ENCODE measurements at regions of chr9 and their contacts with region 1.

Region 1: DNA sequence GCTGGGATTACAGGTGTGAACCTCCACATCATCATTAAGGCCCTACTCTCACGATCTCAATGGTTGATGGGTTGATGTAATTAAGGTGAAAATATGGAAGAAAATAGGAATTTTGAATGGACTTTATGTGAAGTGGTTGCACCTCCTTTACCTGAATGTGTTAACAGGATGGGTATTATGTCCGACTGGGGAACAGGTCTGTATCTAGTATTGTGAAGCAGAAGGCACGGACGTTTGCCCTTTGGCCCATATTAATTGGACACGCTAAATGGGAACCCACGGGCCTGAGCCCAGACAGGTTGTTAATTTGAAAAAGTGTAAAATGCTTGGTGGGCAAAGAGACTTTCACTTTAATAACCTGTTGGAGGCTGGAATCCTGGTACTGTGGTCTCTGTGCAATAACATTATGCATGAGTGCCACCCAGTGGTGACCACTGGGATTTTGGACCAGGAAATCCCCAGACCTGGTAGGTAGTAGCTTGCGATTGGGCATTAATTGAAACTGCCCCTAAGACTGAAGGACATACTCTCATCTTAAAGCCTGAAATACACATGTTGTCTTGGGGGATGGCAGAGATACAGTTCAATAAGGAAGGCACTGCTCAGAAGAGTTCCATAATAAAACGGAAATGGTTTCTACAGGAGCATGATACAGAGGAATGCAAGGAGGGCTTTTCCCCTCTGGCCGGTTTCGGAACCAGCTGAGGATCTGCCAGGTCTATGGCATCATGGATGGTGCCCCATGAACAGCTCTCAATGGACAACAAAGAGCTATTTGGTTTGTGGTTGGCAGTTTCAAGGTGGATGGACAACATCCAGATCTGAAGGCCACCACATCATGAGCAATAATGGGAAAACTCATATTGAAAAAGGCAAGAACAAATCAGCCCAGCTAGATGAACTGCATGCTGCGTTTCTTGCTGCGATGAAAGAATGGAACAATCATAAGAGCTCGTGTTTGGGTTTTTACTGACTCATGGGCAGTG is 26.2 kb upstream of the BICD2 start:
- DNase-seq: peak; percentile 65
- ATAC-seq: peak; percentile 99
- H3K4me3 ChIP-seq: no peak overlapping the region
- H3K27ac ChIP-seq: no peak overlapping the region
- H3K4me1 ChIP-seq: 0 out of 4 replicates have a peak, but pooled peaks cover 0 to 2% of the 10 kb centered on the region in 2 experiments
- H3K27me3 ChIP-seq: no peaks in the 10 kb centered on the region
- CTCF ChIP-seq: peak; percentile 79 to 94 (median 91)
- POLR2A ChIP-seq: no peak
- RAD21 ChIP-seq: peak; percentile 97

Region 2: GRCh38 chr9:92669890-92670708 is 120.7 kb before region 1 on chr9 and contains the start of gene IPPK:
- CTCF ChIA-PET with region 1: interaction called, 12 read pairs
- POLR2A ChIA-PET with region 1: no interaction called
- RAD21 ChIA-PET with region 1: no interaction called
- intact Hi-C with region 1: no loop called
- DNase-seq: peak; percentile 98
- ATAC-seq: peak; percentile 84
- H3K4me3 ChIP-seq: peak within 1 kb of the TSS; percentile 72 to 90
- H3K27ac ChIP-seq: peak within 1 kb of the TSS; percentile 87
- H3K4me1 ChIP-seq: peaks cover 11 to 24% of the 10 kb centered on the region in 2 experiments; a peak in 3 of 4 replicates
- H3K27me3 ChIP-seq: no peaks in the 10 kb centered on the region
- CTCF ChIP-seq: no peak
- POLR2A ChIP-seq: peak; percentile 76
- RAD21 ChIP-seq: no peak
- total RNA-seq, gene IPPK: 15.4 TPM

Region 3: DNA sequence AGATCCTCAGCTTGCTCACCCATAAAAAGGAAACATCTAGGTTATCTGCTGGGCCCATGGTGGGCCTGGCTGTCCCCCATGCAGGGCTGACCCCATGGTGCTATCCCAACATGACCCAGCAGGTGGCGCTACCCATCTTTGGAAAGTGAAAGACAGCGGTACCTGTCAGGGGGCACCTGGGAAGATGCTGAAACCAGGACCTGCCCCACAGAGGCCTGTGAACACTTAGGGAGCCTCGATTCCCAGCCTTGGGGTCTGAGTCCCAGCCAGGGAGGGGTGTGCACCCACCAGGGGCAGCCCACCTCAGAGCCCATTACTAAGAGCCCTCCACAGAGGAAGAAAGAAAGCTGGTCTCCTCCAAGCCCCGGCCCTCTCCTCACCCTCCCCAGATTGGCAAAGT is 74.3 kb before region 1 on chr9:
- CTCF ChIA-PET with region 1: interaction called, 26 read pairs
- POLR2A ChIA-PET with region 1: no interaction called
- RAD21 ChIA-PET with region 1: interaction called, 6 read pairs
- intact Hi-C with region 1: loop called (anchors 1 kb)
- DNase-seq: peak; percentile 15
- ATAC-seq: peak; percentile 88
- H3K4me3 ChIP-seq: no peak overlapping the region
- H3K27ac ChIP-seq: no peak overlapping the region
- H3K4me1 ChIP-seq: no peaks in the 10 kb centered on the region
- H3K27me3 ChIP-seq: no peaks in the 10 kb centered on the region
- CTCF ChIP-seq: peak; percentile 71 to 95 (median 95)
- POLR2A ChIP-seq: no peak
- RAD21 ChIP-seq: peak; percentile 85

Region 4: GRCh38 chr9:92764988-92765936 is 25.6 kb before region 1 on chr9:
- CTCF ChIA-PET with region 1: interaction called, 7 read pairs
- POLR2A ChIA-PET with region 1: no interaction called
- RAD21 ChIA-PET with region 1: no interaction called
- intact Hi-C with region 1: loop called (anchors 1 kb)
- DNase-seq: peak; percentile 91
- ATAC-seq: peak; percentile 94
- H3K4me3 ChIP-seq: peak overlapping the region; percentile 63 to 87
- H3K27ac ChIP-seq: peak overlapping the region; percentile 100
- H3K4me1 ChIP-seq: peaks cover 4 to 23% of the 10 kb centered on the region in 2 experiments; a peak in 3 of 4 replicates
- H3K27me3 ChIP-seq: no peaks in the 10 kb centered on the region
- CTCF ChIP-seq: peak in 2 of 3 experiments; percentile 89 to 96; a peak in 4 of 6 replicates
- POLR2A ChIP-seq: no peak
- RAD21 ChIP-seq: no peak

Measured in HCT116 (cell line).